Activated CD8-positive, alpha-beta T cell treated with anti-CD3 and anti-CD28 coated beads for 36 hours (primary cell): ENCODE measurements at regions of chr22 and their contacts with region 1.

Region 1: GRCh38 chr22:38412435-38413084 is 42.4 kb downstream of the KCNJ4 start:
- DNase-seq: peak; percentile 62
- ATAC-seq: peak; percentile 96
- H3K4me3 Mint-ChIP-seq: no peak overlapping the region
- H3K27ac Mint-ChIP-seq: no peak overlapping the region
- H3K4me1 Mint-ChIP-seq: peaks cover 4% of the 10 kb centered on the region
- H3K27me3 Mint-ChIP-seq: peaks cover 3% of the 10 kb centered on the region
- CTCF ChIP-seq: peak; percentile 94

Region 2: DNA sequence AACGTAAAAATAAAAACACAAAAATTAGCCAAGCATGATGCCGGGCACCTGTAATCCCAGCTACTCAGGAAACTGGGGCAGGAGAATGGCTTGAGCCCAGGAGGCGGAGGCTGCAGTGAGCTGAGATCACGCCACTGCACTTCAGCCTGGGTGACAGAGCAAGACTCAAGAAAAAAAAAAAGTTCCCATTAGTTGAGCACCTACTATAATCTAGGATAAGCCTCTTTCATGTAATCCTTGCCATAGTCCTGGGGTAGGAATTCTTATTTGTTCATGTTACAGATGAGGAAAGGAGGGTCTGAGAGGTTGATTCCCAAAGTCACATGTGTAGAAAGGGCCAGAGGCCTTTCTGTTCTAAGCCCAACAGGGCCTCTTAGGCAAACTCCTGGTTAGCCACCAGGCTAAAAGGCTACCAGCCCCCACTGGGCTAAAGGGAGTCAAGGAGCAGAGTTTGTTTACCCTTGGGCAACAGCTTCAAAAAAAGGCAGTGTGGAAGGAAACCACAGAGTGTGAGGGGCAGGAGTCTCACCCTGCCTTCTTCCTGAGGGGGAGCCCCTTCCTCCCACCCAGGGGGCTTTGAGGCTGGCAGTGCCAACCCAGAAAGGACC is 73.7 kb before region 1 on chr22:
- CTCF ChIA-PET with region 1: no interaction called
- POLR2A ChIA-PET with region 1: no interaction called
- intact Hi-C with region 1: no loop called
- DNase-seq: no peak
- ATAC-seq: no peak
- H3K4me3 Mint-ChIP-seq: no peak overlapping the region
- H3K27ac Mint-ChIP-seq: no peak overlapping the region
- H3K4me1 Mint-ChIP-seq: peaks cover 3% of the 10 kb centered on the region
- H3K27me3 Mint-ChIP-seq: peaks cover 4% of the 10 kb centered on the region
- CTCF ChIP-seq: no peak

Region 3: GRCh38 chr22:38401336-38402084 is 11.1 kb before region 1 on chr22:
- CTCF ChIA-PET with region 1: interaction called, 11 read pairs
- POLR2A ChIA-PET with region 1: no interaction called
- intact Hi-C with region 1: no loop called
- DNase-seq: no peak
- ATAC-seq: no peak
- H3K4me3 Mint-ChIP-seq: no peak overlapping the region
- H3K27ac Mint-ChIP-seq: no peak overlapping the region
- H3K4me1 Mint-ChIP-seq: peaks cover 10% of the 10 kb centered on the region
- H3K27me3 Mint-ChIP-seq: peaks cover 5% of the 10 kb centered on the region
- CTCF ChIP-seq: no peak

Region 4: DNA sequence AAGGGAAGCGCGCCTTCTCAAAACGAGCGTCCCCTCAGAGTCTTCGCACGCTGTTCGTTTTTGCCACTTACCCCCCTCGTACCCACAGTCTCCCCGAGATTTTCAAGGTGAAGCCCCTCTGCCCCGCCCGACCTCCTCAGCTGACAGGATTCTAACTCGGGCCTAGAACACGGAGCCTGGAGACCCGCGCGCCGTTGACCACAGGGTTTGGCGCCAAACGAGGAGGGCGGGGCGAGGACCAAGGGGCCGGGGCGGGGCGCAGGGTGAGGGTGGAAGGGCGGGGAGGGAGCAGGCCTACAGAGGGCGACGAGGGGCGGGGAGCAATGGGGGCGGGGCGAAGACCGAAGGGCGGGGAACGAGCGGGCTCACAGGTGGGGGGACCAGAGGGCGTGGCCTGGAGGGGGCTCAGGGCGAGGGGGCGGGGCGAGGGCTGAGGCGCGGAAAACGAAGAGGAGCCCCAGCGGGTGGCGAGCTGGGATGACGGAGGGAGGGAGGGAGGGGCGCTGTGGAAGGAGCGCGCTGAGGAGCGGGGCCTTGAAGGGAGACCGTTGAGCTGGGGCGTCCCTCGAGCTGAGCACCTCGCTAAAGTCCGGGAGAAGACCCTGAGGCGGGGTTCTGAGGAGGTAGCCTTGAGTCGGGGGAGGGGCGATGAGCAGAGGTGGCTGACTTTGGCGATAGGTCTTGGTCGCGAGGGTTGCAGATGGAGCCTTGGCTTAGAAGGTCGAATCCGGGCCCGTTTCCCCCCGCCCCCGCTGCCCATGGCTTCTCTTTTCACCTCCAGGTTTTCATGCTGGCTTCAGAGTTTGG is 157.6 kb after region 1 on chr22 and contains the start of gene DMC1:
- CTCF ChIA-PET with region 1: interaction called, 18 read pairs
- POLR2A ChIA-PET with region 1: no interaction called
- intact Hi-C with region 1: no loop called
- DNase-seq: peak; percentile 99
- ATAC-seq: peak; percentile 97
- H3K4me3 Mint-ChIP-seq: peak within 1 kb of the TSS; percentile 89
- H3K27ac Mint-ChIP-seq: peak within 1 kb of the TSS; percentile 98
- H3K4me1 Mint-ChIP-seq: peaks cover 13% of the 10 kb centered on the region
- H3K27me3 Mint-ChIP-seq: no peaks in the 10 kb centered on the region
- CTCF ChIP-seq: no peak
- total RNA-seq, gene DMC1: 14.2 to 15.1 TPM